ENCODE measurements at regions of chr2 and their contacts with region 1.

Region 1: DNA sequence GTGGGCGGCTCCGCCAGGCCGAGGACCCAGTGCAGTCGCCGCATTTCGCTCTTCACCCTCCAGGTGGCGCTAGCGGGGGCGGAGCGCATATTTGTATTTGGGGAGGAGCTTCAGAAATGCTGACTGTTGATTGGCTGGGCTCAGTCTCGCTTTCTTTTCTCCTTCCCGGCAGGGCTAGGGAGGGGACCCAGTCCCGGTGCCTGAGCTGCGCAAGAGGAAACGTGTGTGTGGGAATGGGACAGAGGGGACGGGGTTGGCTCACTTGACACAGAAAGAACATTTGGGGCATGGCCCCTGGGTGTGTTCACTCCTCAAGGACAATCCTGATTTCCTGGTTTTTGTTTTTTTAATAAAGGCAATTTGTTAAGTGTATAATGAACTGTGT is 20.3 kb upstream of the DNMT3A start:
- DNase-seq: peak; percentile 96
- ATAC-seq: peak; percentile 78
- H3K4me3 Mint-ChIP-seq: peak overlapping the region; percentile 89
- H3K27ac Mint-ChIP-seq: peak overlapping the region; percentile 98
- H3K4me1 Mint-ChIP-seq: peaks cover 40% of the 10 kb centered on the region
- H3K27me3 Mint-ChIP-seq: no peaks in the 10 kb centered on the region
- CTCF ChIP-seq: peak; percentile 42

Region 2: DNA sequence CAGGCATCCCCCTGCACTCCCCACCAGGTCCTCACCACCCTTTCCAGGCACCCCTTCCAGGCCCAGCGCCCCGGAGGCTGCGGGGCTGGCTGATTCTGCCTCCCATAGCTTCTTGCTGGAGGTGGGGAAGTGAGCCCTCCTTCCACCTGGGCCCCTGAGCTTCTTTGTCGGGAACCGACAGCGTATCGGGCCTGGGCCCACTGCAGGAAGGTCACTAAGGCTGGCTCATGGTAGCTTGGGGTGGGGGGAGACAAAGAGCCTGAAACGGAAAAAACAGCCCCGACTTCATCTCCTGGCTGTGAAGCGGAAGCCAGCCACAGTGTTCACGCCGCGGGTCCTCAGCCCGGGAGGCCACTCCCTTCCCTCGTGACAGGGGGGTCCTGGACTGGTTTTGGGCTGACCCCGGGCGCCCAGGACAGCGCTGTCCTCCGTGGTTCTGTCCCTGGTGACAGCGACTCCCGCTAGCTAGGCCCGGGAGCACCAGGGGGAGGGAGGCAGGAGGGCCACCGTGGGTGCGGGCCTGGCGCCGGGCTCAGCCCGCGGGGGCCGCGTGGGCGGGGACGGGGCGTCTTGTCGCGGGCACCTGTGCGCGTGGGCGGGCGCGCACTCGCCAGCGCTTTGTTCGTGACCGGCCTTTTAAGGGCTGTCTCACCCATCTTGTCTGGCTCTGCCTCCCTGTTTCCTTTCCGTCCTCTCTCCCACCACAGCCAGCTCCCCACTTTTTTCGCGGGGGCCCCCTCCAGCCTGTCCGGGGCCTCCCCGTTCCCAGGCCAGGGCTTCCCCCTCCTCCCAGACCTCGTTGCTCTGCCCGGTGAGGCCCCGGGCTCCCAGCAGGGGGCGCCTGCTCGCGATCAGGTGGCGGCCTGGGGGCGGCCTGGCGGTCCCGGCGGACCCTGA is 85.2 kb before region 1 on chr2:
- CTCF ChIA-PET with region 1: interaction called, 6 read pairs
- POLR2A ChIA-PET with region 1: interaction called, 8 read pairs
- intact Hi-C with region 1: loop called (anchors 1 kb)
- DNase-seq: peak; percentile 70
- ATAC-seq: peak; percentile 13
- H3K4me3 Mint-ChIP-seq: peak overlapping the region; percentile 67
- H3K27ac Mint-ChIP-seq: peak overlapping the region; percentile 76
- H3K4me1 Mint-ChIP-seq: peaks cover 88% of the 10 kb centered on the region
- H3K27me3 Mint-ChIP-seq: no peaks in the 10 kb centered on the region
- CTCF ChIP-seq: no peak

Region 3: DNA sequence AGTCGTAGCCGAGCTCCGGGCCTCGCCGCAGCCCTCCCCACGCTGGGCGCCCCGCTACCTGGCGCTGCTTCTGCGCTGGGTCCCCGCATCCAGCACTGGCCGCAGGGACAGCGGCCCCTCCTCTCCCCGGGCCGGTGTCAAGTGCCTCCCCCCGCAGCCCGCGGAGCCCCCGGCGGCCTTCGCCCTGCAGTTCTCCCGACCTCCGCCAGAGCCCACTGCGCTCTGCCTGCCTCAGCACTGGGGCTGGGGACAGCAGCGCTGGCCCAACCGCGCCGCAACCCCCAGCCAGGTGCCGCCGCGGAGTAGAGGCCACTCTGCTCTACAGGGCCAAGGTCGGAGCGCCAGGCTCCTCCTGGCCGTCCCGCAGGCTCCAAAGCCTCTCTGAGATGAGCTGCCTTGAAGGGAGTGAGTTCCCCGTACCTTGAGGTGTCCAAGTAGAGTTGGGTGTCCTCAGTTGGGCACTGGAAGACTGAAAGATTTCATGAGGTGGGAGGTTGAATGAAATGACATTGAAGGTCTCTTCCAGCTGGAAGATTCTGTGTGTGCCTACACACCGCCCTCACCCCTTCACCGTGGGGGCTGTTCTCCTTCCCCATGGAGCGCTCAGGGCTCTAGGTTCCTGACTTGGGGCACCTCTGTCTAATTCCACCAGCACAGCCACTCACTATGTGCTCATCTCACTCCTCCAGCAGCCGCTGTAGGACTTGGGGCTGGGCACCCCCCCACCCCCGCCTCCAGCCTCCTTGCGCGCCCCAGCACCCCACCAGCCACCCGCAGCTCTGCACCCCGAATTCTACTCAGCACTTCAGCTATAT is 19.5 kb before region 1 on chr2:
- CTCF ChIA-PET with region 1: interaction called, 11 read pairs
- POLR2A ChIA-PET with region 1: interaction called, 15 read pairs
- intact Hi-C with region 1: loop called (anchors 1 kb)
- DNase-seq: peak; percentile 82
- ATAC-seq: peak; percentile 92
- H3K4me3 Mint-ChIP-seq: peak overlapping the region; percentile 84
- H3K27ac Mint-ChIP-seq: peak overlapping the region; percentile 59
- H3K4me1 Mint-ChIP-seq: peaks cover 19% of the 10 kb centered on the region
- H3K27me3 Mint-ChIP-seq: peaks cover 1% of the 10 kb centered on the region
- CTCF ChIP-seq: peak; percentile 74

Region 4: GRCh38 chr2:25411281-25411680 is 49.2 kb after region 1 on chr2:
- CTCF ChIA-PET with region 1: interaction called, 10 read pairs
- POLR2A ChIA-PET with region 1: interaction called, 206 read pairs
- intact Hi-C with region 1: loop called (anchors 2 kb)
- DNase-seq: no peak
- ATAC-seq: peak; percentile 50
- H3K4me3 Mint-ChIP-seq: peak overlapping the region; percentile 71
- H3K27ac Mint-ChIP-seq: peak overlapping the region; percentile 87
- H3K4me1 Mint-ChIP-seq: peaks cover 71% of the 10 kb centered on the region
- H3K27me3 Mint-ChIP-seq: no peaks in the 10 kb centered on the region
- CTCF ChIP-seq: no peak

Region 5: DNA sequence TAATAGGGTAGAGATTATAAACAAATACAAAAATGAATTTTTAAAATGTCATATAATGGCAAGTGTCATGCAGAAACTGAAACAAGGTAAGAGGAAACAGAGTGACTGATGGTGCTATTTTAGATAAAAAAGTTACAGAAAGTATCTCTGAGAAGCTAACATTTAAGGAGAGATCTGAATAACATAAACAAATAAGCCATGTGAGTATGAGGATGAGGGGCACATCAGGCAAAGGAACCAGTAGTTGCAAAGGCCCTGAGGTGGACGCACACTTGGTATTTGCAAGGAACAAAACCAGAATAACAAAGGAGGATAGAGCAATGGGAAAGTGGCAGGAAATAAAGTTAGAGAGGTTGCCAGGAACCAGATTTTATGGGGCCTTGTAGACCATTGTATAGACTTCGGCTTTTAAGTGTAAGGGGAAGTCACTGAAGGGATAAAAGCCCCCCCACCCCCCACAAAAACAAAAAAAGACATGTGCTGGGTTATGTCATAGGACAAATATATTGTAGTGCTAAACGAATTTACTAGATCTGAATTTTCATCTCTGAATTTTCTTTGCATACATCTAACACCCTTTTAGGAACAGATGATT is 152.1 kb after region 1 on chr2:
- CTCF ChIA-PET with region 1: interaction called, 4 read pairs
- POLR2A ChIA-PET with region 1: interaction called, 11 read pairs
- intact Hi-C with region 1: no loop called
- DNase-seq: no peak
- ATAC-seq: no peak
- H3K4me3 Mint-ChIP-seq: peak overlapping the region; percentile 11
- H3K27ac Mint-ChIP-seq: peak overlapping the region; percentile 59
- H3K4me1 Mint-ChIP-seq: peaks cover 37% of the 10 kb centered on the region
- H3K27me3 Mint-ChIP-seq: no peaks in the 10 kb centered on the region
- CTCF ChIP-seq: no peak

Region 6: GRCh38 chr2:25567406-25567805 is 205.4 kb after region 1 on chr2:
- CTCF ChIA-PET with region 1: interaction called, 19 read pairs
- POLR2A ChIA-PET with region 1: interaction called, 16 read pairs
- intact Hi-C with region 1: loop called (anchors 1 kb)
- DNase-seq: no peak
- ATAC-seq: peak; percentile 53
- H3K4me3 Mint-ChIP-seq: no peak overlapping the region
- H3K27ac Mint-ChIP-seq: no peak overlapping the region
- H3K4me1 Mint-ChIP-seq: peaks cover 27% of the 10 kb centered on the region
- H3K27me3 Mint-ChIP-seq: no peaks in the 10 kb centered on the region
- CTCF ChIP-seq: no peak

Region 7: GRCh38 chr2:25878361-25879132 is 516.5 kb after region 1 on chr2 and contains the start of gene ASXL2:
- CTCF ChIA-PET with region 1: no interaction called
- POLR2A ChIA-PET with region 1: interaction called, 4 read pairs
- intact Hi-C with region 1: loop called (anchors 1 kb)
- DNase-seq: peak; percentile 98
- ATAC-seq: peak; percentile 88
- H3K4me3 Mint-ChIP-seq: peak within 1 kb of the TSS; percentile 98
- H3K27ac Mint-ChIP-seq: peak within 1 kb of the TSS; percentile 100
- H3K4me1 Mint-ChIP-seq: peaks cover 24% of the 10 kb centered on the region
- H3K27me3 Mint-ChIP-seq: peaks cover 2% of the 10 kb centered on the region
- CTCF ChIP-seq: no peak
- total RNA-seq, gene ASXL2: 38.4 and 41.9 TPM in 2 replicates